Esophagus squamous epithelium (tissue), 5 donors: ENCODE measurements at regions of chr1 and their contacts with region 1.

Region 1: GRCh38 chr1:201792534-201793305 is 36.2 kb upstream of the IPO9 start:
- DNase-seq: no peak
- H3K4me3 ChIP-seq: no peak overlapping the region
- H3K27ac ChIP-seq: peak overlapping the region; percentile 19 to 83 (median 75)
- H3K4me1 ChIP-seq: peaks cover 8 to 44% (median 38%) of the 10 kb centered on the region in 3 donors
- H3K27me3 ChIP-seq: no peaks in the 10 kb centered on the region
- CTCF ChIP-seq: peak; percentile 88 to 98 (median 97)
- POLR2A ChIP-seq: no peak

Region 2: DNA sequence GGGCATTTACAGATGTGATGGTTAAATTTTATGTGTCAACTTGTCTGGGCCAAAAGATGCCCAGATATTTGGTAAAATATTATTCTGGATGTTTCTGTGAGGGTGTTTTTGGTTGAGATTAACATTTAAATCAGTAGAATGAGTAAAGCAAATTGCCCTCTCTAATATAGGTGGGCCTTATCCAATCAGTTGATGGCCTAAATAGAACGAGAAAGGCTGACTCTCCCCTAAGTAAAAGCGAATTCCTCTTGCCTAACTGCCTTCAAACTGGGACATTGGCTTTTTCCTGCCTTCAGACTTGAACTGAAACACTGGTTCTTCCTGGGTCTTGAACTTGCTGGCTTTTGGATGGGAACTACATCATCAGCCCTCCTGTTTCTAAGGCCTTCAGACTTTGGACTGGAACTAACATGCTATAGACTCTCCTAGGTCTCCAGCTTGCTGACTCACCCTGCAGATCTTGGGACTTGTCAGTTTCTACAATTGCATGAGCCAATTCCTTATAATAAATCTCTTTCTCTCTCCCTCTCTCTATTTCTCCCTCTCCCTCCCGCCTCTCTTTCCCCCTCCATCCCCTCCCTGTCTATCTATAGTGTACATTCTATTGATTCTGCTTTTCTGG is 264.0 kb before region 1 on chr1:
- intact Hi-C with region 1: loop called (anchors 10 kb)
- DNase-seq: no peak
- H3K4me3 ChIP-seq: no peak overlapping the region
- H3K27ac ChIP-seq: no peak overlapping the region
- H3K4me1 ChIP-seq: peaks cover 13 to 21% (median 15%) of the 10 kb centered on the region in 3 donors
- H3K27me3 ChIP-seq: no peaks in the 10 kb centered on the region
- CTCF ChIP-seq: no peak
- POLR2A ChIP-seq: no peak

Region 3: GRCh38 chr1:201559679-201560162 is 233.0 kb before region 1 on chr1:
- intact Hi-C with region 1: loop called (anchors 5 kb)
- DNase-seq: no peak
- H3K4me3 ChIP-seq: no peak overlapping the region
- H3K27ac ChIP-seq: peak overlapping the region in 3 of 4 donors; percentile 18 to 21 (median 19)
- H3K4me1 ChIP-seq: peaks cover 0 to 68% (median 28%) of the 10 kb centered on the region in 3 donors
- H3K27me3 ChIP-seq: no peaks in the 10 kb centered on the region
- CTCF ChIP-seq: peak; percentile 57 to 97 (median 94)
- POLR2A ChIP-seq: no peak

Region 4: DNA sequence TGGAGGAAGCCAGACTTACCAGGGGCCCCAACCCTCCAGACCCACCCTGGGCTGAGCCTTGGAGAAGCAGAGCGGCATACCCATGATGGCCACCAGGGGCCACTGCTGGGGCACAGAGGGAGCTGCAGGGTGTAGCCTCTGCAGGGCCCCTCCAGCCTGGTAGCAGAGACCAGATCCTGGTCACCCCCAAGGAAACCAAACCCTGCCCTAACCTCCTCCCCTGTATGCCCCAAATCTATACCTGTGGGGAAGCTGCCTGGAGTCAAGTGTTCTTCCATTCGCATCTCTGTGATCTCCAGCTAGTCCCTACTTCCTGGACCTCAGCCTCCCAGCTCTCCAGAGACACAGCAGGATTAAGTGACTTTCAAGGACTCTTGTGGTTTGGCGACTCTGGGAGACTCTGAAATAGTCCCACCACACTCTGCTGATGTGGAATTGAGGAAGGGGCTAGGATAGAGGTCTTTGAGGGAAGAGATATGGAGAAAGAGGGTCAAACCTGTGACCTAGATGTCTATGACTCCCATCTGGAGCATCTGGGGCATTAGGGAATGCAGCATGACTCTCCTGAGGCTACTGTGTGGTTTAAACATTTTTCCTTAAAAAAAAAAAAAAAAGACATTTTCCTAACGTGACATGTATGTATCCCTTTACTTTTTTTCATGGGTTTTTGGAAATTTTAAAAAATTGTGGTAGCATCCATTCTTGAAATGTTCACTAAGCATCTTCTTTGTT is 83.0 kb before region 1 on chr1:
- intact Hi-C with region 1: loop called (anchors 2 kb)
- DNase-seq: no peak
- H3K4me3 ChIP-seq: no peak overlapping the region
- H3K27ac ChIP-seq: peak overlapping the region in 3 of 4 donors; percentile 16 to 90 (median 45)
- H3K4me1 ChIP-seq: peaks cover 25 to 66% (median 47%) of the 10 kb centered on the region in 3 donors
- H3K27me3 ChIP-seq: peaks cover 0 to 4% (median 0%) of the 10 kb centered on the region in 4 donors
- CTCF ChIP-seq: peak; percentile 90 to 96 (median 92)
- POLR2A ChIP-seq: no peak

Region 5: GRCh38 chr1:201933840-201934430 is 141.2 kb after region 1 on chr1:
- intact Hi-C with region 1: no loop called
- DNase-seq: no peak
- H3K4me3 ChIP-seq: no peak overlapping the region
- H3K27ac ChIP-seq: peak overlapping the region in 3 of 4 donors; percentile 41 to 72 (median 63)
- H3K4me1 ChIP-seq: peaks cover 0 to 55% (median 7%) of the 10 kb centered on the region in 3 donors
- H3K27me3 ChIP-seq: no peaks in the 10 kb centered on the region
- CTCF ChIP-seq: no peak
- POLR2A ChIP-seq: no peak